AG04450 (cell line): ENCODE measurements at regions of chr10 and their contacts with region 1.

Region 1: DNA sequence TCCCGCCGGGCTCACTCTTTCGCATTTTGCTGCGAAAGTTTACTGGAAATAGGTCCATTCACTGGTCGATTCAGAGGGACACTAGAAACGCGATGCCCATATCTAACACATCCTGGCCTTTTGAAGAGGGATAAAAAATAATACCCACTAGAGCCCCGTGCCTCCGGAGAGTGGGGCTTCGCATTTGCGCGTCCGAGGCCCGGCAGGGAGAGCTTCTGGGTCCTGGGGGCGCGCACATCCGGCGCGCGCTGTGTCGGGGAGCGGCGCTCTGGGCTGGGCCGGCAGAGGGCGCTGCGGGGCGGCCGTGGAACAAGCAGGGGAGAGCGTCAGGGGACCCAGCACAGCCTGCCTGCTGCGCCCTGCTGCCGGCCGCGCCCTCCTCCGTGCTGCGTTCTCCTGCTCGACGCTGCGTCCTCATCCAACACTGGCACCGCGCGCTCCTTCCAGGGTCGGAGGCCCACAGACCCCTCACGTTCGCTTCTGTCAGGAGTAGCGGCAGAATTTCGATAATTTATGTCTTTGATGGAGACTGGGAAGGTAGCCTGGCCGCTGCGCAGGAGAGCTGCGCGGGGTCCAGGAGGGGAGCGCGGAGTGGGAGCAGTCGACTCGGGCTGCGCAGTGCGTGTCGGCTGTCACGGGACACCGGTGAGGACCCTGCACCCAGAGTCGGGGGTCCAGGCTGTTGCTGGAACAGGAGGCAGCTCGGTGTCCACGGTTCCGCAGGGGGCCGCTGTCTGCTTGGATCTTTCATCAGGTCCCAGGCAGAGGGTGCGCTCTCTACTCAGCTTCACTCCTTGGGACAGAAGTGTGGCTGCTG is 41.5 kb upstream of the ZNF32 start:
- DNase-seq: peak; percentile 26
- H3K4me3 ChIP-seq: peak overlapping the region; percentile 73
- H3K27ac ChIP-seq: no peak overlapping the region
- H3K27me3 ChIP-seq: no peaks in the 10 kb centered on the region
- CTCF ChIP-seq: peak; percentile 75

Region 2: GRCh38 chr10:43700306-43700705 is 10.1 kb after region 1 on chr10:
- CTCF ChIA-PET with region 1: interaction called, 10 read pairs
- POLR2A ChIA-PET with region 1: no interaction called
- DNase-seq: no peak
- H3K4me3 ChIP-seq: no peak overlapping the region
- H3K27ac ChIP-seq: no peak overlapping the region
- H3K27me3 ChIP-seq: no peaks in the 10 kb centered on the region
- CTCF ChIP-seq: no peak